ENCODE measurements at regions of chr19 and their contacts with region 1.

Region 1: DNA sequence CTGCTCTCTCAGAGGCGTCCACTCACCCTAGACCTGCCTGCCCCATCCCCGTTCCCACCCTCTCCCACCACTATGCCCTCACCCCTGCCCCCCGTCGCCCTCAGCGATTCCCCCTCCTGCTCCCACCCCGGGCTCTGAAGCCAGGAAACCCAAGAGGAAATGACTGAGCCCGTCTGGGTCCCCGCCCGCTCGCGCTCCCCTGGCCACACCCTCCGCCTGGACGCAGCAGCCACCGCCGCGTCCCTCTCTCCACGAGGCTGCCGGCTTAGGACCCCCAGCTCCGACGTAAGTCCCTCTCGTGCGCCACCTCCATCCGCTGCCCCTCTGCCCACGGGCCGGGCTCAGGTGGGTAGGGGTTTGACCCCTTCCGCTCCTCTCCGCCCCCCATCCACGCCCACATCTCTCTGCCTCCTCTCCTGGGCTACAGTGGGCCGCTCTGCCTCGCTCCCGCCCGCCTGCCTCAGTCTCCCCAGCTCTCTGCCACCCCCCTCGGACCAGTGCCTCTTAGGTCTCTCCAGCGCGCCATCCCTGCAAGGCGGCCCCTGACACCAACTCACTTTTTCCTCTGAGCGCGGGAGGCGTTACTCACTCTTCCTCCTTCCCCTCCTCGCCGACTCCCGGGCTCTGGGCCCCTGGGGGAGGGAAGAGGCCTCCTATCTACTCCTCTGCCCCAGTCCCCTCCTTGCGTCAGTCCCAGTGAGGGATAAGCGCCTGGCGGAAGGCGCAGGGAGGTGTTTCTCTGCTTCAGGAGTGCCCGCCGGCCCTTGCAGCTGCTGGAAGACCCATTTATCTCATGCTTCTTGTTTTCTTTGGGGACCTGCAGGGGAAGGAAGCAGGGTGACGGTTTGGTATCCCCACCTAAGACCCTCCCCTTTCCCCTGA is at the start of gene FXYD5:
- DNase-seq: peak; percentile 60
- H3K4me3 Mint-ChIP-seq: peak within 1 kb of the TSS; percentile 100
- H3K27ac Mint-ChIP-seq: peak within 1 kb of the TSS; percentile 100
- H3K4me1 Mint-ChIP-seq: peaks cover 54% of the 10 kb centered on the region
- H3K27me3 Mint-ChIP-seq: peaks cover 7% of the 10 kb centered on the region
- total RNA-seq, gene FXYD5: 299 and 309 TPM in 2 replicates

Region 2: DNA sequence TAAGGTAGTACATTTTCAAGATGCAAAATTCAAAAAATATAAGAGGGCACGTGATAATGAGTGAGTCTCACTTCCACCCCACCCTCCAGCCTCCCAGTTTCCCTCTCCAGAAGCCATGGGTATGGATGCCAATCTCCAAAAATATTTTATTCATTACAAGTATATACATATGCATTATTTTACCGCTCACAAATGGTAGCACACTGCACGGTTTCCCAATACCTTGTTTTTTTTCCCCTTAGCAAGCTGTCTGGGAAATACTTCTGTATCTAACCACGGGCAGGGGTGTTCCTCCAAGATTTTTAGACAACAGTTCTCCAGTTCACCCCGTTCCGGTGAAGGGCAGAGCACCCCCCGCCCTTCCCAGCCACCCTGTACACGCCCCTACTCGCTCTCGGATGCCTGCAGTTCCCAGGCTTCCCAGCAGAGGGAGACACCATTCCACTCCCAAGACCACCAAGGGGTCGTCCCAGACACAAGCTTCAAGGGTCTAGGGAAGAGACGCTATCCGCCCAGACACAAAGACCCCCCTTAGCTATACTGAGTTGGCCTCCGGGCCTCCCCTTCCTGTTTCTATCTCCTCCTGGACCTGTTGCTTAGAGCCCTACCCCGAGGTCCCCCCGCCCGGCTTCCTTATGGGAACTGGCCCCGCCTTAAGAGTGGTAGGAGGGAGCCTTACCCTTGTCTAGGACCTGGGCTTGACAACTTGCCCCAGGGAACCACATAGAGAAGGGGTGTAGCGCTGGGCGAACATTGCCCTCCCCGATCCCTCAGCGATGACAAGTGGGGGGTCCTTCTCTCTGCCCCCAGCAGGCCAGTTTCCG is 40.2 kb before region 1 on chr19:
- intact Hi-C with region 1: no loop called
- DNase-seq: peak; percentile 38
- H3K4me3 Mint-ChIP-seq: no peak overlapping the region
- H3K27ac Mint-ChIP-seq: no peak overlapping the region
- H3K4me1 Mint-ChIP-seq: peaks cover 6% of the 10 kb centered on the region
- H3K27me3 Mint-ChIP-seq: peaks cover 7% of the 10 kb centered on the region

Region 3: GRCh38 chr19:35170156-35171020 is 15.6 kb after region 1 on chr19:
- intact Hi-C with region 1: loop called (anchors 2 kb)
- DNase-seq: no peak
- H3K4me3 Mint-ChIP-seq: no peak overlapping the region
- H3K27ac Mint-ChIP-seq: peak overlapping the region; percentile 34
- H3K4me1 Mint-ChIP-seq: peaks cover 34% of the 10 kb centered on the region
- H3K27me3 Mint-ChIP-seq: no peaks in the 10 kb centered on the region

Region 4: GRCh38 chr19:35193869-35194665 is 39.3 kb after region 1 on chr19:
- intact Hi-C with region 1: no loop called
- DNase-seq: no peak
- H3K4me3 Mint-ChIP-seq: no peak overlapping the region
- H3K27ac Mint-ChIP-seq: no peak overlapping the region
- H3K4me1 Mint-ChIP-seq: peaks cover 8% of the 10 kb centered on the region
- H3K27me3 Mint-ChIP-seq: peaks cover 12% of the 10 kb centered on the region

Region 5: DNA sequence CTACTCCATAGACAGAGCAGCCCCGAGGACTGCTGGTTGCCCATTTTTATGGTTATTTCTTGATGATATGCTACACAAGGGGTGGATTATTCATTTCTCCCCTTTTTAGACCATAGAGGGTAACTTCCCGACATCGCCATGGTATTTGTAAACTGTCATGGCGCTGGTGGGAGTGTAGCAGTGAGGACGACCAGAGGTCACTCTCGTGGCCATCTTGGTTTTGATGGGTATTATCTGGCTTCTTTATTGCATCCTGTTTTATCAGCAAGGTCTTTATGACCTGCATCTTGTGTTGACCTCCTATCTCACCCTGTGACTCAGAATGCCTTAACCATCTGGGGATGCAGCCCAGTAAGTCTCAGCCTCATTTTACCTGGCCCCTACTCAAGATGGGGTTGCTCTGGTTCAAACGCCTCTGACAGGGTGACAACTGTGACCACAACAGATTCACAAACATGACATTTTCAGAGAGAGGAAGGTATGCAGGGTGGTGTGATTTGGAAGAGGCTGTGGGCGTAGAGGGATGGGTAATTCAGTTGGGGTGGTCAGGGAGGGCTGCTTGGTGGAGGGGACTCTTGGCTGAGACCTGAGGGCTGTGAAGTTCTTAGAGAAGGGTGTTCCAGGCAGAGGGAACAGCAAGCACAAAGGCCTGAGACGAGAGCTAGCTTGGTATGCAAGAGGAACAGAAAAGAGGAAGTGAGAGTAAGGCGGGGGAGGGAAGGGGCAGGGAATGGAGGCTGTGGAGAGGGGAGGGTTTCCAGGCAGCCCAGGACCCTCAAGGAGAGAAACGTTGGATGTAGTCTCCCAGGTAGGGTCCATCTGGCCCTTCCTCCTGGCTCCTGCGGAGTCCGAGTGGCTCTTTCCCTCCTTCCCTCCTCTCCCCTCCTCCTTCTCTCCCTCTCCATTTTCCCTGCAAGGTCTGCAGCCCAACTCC is 50.3 kb after region 1 on chr19:
- intact Hi-C with region 1: loop called (anchors 1 kb)
- DNase-seq: no peak
- H3K4me3 Mint-ChIP-seq: peak overlapping the region; percentile 61
- H3K27ac Mint-ChIP-seq: peak overlapping the region; percentile 95
- H3K4me1 Mint-ChIP-seq: peaks cover 63% of the 10 kb centered on the region
- H3K27me3 Mint-ChIP-seq: no peaks in the 10 kb centered on the region

Region 6: GRCh38 chr19:35236638-35237400 is 82.1 kb after region 1 on chr19:
- intact Hi-C with region 1: no loop called
- DNase-seq: no peak
- H3K4me3 Mint-ChIP-seq: no peak overlapping the region
- H3K27ac Mint-ChIP-seq: no peak overlapping the region
- H3K4me1 Mint-ChIP-seq: peaks cover 17% of the 10 kb centered on the region
- H3K27me3 Mint-ChIP-seq: peaks cover 7% of the 10 kb centered on the region